Heart left ventricle (tissue), 16 donors: ENCODE measurements at regions of chr17 and their contacts with region 1.

Region 1: GRCh38 chr17:68740555-68741447 is 139.6 kb upstream of the FAM20A start:
- DNase-seq: no peak
- ATAC-seq: no peak
- H3K4me3 ChIP-seq: no peak overlapping the region
- H3K27ac ChIP-seq: no peak overlapping the region
- H3K4me1 ChIP-seq: peaks cover 0 to 13% (median 0%) of the 10 kb centered on the region in 12 donors
- H3K27me3 ChIP-seq: no peaks in the 10 kb centered on the region
- CTCF ChIP-seq: no peak
- POLR2A ChIP-seq: no peak

Region 2: GRCh38 chr17:68627956-68628575 is 112.7 kb before region 1 on chr17:
- intact Hi-C with region 1: loop called in 1 of 10 experiments (anchors 10 kb)
- DNase-seq: peak in 1 of 5 donors; percentile 22
- ATAC-seq: peak in 3 of 4 donors; percentile 42 to 59 (median 46)
- H3K4me3 ChIP-seq: no peak overlapping the region
- H3K27ac ChIP-seq: no peak overlapping the region
- H3K4me1 ChIP-seq: peaks cover 0 to 6% (median 0%) of the 10 kb centered on the region in 12 donors
- H3K27me3 ChIP-seq: no peaks in the 10 kb centered on the region
- CTCF ChIP-seq: no peak
- POLR2A ChIP-seq: no peak

Region 3: GRCh38 chr17:68674029-68674940 is 66.5 kb before region 1 on chr17:
- intact Hi-C with region 1: no loop called
- DNase-seq: no peak
- ATAC-seq: no peak
- H3K4me3 ChIP-seq: no peak overlapping the region
- H3K27ac ChIP-seq: no peak overlapping the region
- H3K4me1 ChIP-seq: no peaks in the 10 kb centered on the region
- H3K27me3 ChIP-seq: no peaks in the 10 kb centered on the region
- CTCF ChIP-seq: no peak
- POLR2A ChIP-seq: no peak

Region 4: DNA sequence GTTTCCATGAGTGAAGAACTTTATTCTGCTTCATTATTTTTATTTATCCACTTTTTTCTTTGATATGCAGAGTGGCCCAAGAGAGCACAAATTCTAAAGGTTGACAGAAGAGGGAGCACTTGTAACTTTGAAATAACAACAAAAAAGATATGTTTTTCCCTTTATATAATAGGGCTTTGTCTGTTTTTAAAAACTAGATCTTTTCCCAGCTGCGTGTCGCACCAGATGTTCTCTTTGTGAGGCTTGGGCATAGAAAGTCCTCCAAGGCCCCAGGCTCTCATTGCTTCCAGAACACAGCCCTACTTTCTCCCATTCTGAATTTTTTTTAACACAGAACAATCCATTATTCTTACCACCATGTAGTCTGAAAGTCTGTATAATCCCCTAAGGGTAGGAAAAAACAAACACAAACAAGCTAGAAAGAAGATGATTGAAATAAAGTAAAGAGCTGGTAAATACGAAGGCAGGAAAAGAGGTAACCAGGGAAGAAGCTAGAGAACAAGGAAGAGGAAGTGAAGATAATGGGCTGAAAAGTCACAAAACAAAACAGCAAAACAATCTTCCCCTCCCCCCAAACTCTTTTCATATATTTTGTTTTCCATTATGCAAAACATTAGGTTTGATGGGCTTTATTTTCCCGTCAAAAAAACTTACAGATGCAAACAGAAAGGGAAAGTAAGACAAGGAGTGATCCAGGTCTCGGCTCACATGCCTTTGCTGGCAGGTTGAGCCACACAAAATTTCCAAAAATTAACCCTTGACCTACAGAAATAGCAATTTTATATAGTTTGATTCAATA is 54.0 kb after region 1 on chr17:
- intact Hi-C with region 1: no loop called
- DNase-seq: peak in 3 of 5 donors; percentile 53 to 74 (median 55)
- ATAC-seq: peak; percentile 18 to 81 (median 70)
- H3K4me3 ChIP-seq: peak overlapping the region in 1 of 12 donors; percentile 34
- H3K27ac ChIP-seq: peak overlapping the region; percentile 65 to 93 (median 80)
- H3K4me1 ChIP-seq: peaks cover 0 to 46% (median 9%) of the 10 kb centered on the region in 12 donors
- H3K27me3 ChIP-seq: no peaks in the 10 kb centered on the region
- CTCF ChIP-seq: peak; percentile 17 to 58 (median 27)
- POLR2A ChIP-seq: no peak

Region 5: GRCh38 chr17:68906638-68907037 is 165.8 kb after region 1 on chr17:
- intact Hi-C with region 1: no loop called
- DNase-seq: no peak
- ATAC-seq: no peak
- H3K4me3 ChIP-seq: no peak overlapping the region
- H3K27ac ChIP-seq: peak overlapping the region in 4 of 12 donors; percentile 2 to 20 (median 11)
- H3K4me1 ChIP-seq: peaks cover 0 to 32% (median 14%) of the 10 kb centered on the region in 12 donors
- H3K27me3 ChIP-seq: no peaks in the 10 kb centered on the region
- CTCF ChIP-seq: peak in 10 of 12 donors; percentile 12 to 56 (median 22)
- POLR2A ChIP-seq: no peak